ENCODE measurements at regions of chr3 and their contacts with region 1.

Region 1: GRCh38 chr3:18559331-18559842 is 134.2 kb upstream of the SATB1 start:
- DNase-seq: peak; percentile 16
- H3K4me3 ChIP-seq: no peak overlapping the region; a peak in 1 of 4 replicates
- H3K27ac ChIP-seq: no peak overlapping the region
- H3K4me1 ChIP-seq: no peaks in the 10 kb centered on the region
- H3K27me3 ChIP-seq: no peaks in the 10 kb centered on the region
- CTCF ChIP-seq: peak; percentile 74
- EP300 ChIP-seq: no peak
- RAD21 ChIP-seq: peak; percentile 72

Region 2: GRCh38 chr3:18572809-18573208 is 13.4 kb after region 1 on chr3:
- CTCF ChIA-PET with region 1: interaction called, 41 read pairs
- POLR2A ChIA-PET with region 1: no interaction called
- DNase-seq: no peak
- H3K4me3 ChIP-seq: no peak overlapping the region
- H3K27ac ChIP-seq: no peak overlapping the region
- H3K4me1 ChIP-seq: no peaks in the 10 kb centered on the region
- H3K27me3 ChIP-seq: no peaks in the 10 kb centered on the region
- CTCF ChIP-seq: no peak
- EP300 ChIP-seq: no peak
- RAD21 ChIP-seq: no peak

Region 3: DNA sequence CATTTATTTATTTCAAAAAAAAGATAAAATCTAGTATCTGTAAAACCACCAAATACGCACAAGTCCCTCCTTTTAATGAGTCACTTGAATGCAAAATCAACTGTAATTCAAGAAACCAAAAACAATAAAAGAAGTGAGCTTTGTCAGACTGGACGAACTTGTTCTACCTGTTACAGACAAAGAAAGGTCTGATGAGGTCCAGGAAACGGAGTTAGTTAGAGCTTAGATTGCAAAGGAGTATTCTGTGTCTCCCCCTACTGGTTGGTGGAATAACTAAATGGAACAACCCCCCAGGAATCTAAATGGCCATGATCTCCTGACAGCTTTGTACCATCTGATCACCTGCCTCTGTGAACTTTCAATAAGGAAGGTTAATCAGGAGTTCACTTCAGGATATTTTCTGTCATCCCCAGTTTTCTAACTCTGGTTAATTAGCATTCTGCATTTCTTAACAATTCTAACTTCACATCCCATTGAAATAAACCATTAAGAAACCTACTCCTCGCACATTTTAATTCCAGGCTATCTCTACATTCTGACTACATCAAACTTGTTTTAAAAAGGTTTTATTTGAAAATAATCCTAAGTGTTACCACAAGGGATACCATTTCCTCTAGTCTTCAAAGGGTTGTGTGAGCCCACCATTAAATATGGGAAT is 198.8 kb after region 1 on chr3:
- CTCF ChIA-PET with region 1: interaction called, 26 read pairs
- POLR2A ChIA-PET with region 1: no interaction called
- DNase-seq: peak; percentile 27
- H3K4me3 ChIP-seq: no peak overlapping the region; a peak in 1 of 4 replicates
- H3K27ac ChIP-seq: no peak overlapping the region
- H3K4me1 ChIP-seq: no peaks in the 10 kb centered on the region; a peak in 1 of 4 replicates
- H3K27me3 ChIP-seq: no peaks in the 10 kb centered on the region
- CTCF ChIP-seq: peak; percentile 65
- EP300 ChIP-seq: no peak
- RAD21 ChIP-seq: peak; percentile 86

Measured in SK-N-SH (cell line).